Endothelial cell of umbilical vein (primary cell): ENCODE measurements at regions of chr5 and their contacts with region 1.

Region 1: DNA sequence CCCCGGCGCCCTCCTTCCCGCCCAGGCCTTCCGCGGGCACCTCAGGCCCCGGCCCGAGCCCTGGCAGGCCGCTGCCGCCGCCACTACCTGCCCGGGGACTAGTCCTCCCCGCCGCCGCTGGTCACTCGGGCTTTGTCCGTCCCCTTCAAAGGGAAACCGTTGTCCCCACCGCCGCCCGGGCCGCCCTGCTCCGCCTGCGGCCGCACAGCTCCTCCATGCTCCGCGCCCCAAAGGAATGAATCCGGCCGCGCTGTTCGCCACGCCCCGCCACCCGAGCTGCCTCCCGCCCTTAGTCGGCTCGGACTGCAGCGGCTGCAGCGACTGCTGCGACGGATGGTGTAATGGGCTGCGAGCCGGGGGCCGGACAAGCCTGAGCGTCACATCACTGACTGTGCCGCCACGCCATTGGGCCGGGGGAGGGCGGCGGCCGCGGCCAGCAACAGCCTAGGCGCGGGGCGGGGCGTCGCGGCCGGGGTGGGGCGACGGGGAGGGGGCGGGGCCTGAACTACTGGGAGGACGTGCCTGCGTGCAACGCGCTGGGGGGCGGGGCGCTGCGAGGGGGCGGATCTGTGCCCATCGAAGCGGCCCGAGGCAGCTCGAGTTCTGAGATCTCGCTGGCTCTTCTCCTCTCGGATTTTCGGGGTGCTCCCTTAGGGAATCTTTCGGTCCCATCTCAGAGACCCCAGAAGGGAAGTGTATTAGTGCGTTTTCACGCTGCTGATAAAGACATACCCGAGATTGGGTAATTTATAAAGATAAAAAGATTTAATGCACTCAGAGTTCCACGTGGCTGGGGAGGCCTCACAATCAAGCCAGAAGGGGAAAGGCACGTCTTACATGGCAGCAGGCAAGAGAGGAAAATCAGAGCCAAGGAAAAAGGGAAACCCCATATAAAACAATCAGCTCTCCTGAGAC is at the start of gene FEM1C:
- DNase-seq: peak; percentile 98
- H3K4me3 ChIP-seq: peak within 1 kb of the TSS; percentile 90 to 99 (median 97)
- H3K27ac ChIP-seq: peak within 1 kb of the TSS; percentile 89
- H3K4me1 ChIP-seq: peaks cover 25% of the 10 kb centered on the region
- H3K27me3 ChIP-seq: no peaks in the 10 kb centered on the region
- CTCF ChIP-seq: no peak
- POLR2A ChIP-seq: peak; percentile 92
- total RNA-seq, gene FEM1C: 16.0 and 16.7 TPM in 2 replicates

Region 2: GRCh38 chr5:115330830-115331229 is 213.9 kb before region 1 on chr5:
- CTCF ChIA-PET with region 1: no interaction called
- POLR2A ChIA-PET with region 1: no interaction called
- dilution Hi-C with region 1: no loop called
- intact Hi-C with region 1: no loop called
- DNase-seq: no peak
- H3K4me3 ChIP-seq: no peak overlapping the region
- H3K27ac ChIP-seq: no peak overlapping the region
- H3K4me1 ChIP-seq: no peaks in the 10 kb centered on the region
- H3K27me3 ChIP-seq: no peaks in the 10 kb centered on the region
- CTCF ChIP-seq: no peak
- POLR2A ChIP-seq: no peak

Region 3: DNA sequence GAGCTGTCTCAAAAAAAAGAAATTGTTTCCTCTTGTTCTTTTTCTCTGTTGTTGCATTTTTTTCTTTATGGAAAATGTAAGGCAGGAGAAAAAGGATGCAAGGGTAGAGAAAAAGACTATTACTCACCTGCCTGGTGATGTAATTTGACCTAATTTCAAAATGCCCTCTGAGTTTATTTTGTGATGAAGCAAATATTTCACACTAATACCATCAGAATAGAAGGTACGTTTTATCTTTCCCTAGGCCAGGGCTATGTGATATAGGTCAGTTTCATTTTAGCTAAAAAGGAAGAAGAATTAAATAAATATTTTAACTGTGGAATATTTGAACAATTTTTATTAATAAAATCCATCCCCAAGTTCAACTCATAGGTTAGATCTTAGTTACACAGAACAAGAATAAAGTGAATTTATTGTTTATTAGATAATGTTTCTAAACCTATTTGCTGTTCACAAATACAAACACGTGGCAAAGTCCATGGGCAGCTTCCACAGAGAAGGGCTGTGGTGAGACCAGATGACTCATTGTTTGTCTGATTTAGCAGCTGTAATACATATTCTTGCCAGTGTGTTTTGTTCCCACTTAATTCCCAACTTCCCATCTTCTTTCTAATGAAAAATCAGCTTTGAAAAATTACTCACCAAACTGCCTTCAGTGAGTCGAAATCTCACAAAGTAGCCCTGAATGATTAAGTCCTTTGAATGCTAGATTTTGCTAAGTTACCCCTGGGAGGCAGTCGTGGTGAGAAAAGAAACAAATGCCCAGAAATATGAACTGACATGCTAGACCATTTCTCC is 195.5 kb before region 1 on chr5:
- CTCF ChIA-PET with region 1: interaction called, 4 read pairs
- POLR2A ChIA-PET with region 1: no interaction called
- dilution Hi-C with region 1: no loop called
- intact Hi-C with region 1: loop called (anchors 1 kb)
- DNase-seq: peak; percentile 86
- H3K4me3 ChIP-seq: peak overlapping the region in 1 of 3 experiments; percentile 20
- H3K27ac ChIP-seq: peak overlapping the region; percentile 76
- H3K4me1 ChIP-seq: peaks cover 18% of the 10 kb centered on the region
- H3K27me3 ChIP-seq: no peaks in the 10 kb centered on the region
- CTCF ChIP-seq: no peak
- POLR2A ChIP-seq: no peak

Region 4: GRCh38 chr5:115415143-115415491 is 129.6 kb before region 1 on chr5:
- CTCF ChIA-PET with region 1: interaction called, 3 read pairs
- POLR2A ChIA-PET with region 1: no interaction called
- dilution Hi-C with region 1: no loop called
- intact Hi-C with region 1: loop called (anchors 5 kb)
- DNase-seq: peak; percentile 57
- H3K4me3 ChIP-seq: no peak overlapping the region
- H3K27ac ChIP-seq: no peak overlapping the region
- H3K4me1 ChIP-seq: peaks cover 17% of the 10 kb centered on the region
- H3K27me3 ChIP-seq: no peaks in the 10 kb centered on the region
- CTCF ChIP-seq: no peak
- POLR2A ChIP-seq: no peak

Region 5: DNA sequence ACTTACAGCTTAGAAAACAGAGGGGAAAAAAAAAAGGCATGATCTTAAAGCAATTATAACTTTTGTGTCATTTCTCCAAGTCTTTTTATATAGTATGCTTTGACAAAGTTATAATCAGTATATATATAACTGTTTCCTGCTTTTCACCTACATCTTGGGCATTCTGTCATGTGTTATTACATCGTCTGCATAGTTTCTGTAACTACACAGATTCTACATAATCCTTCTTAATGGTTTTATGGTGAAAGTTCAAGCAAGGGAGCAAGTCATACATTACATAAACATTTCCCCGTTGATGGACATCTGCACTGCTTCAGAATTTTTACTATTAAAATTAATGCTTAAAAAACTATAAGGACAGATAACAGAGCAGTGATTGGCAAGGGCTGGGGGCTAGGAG is 12.2 kb before region 1 on chr5:
- CTCF ChIA-PET with region 1: interaction called, 9 read pairs
- POLR2A ChIA-PET with region 1: interaction called, 3 read pairs
- dilution Hi-C with region 1: no loop called
- intact Hi-C with region 1: loop called (anchors 1 kb)
- DNase-seq: peak; percentile 42
- H3K4me3 ChIP-seq: no peak overlapping the region
- H3K27ac ChIP-seq: no peak overlapping the region
- H3K4me1 ChIP-seq: peaks cover 18% of the 10 kb centered on the region
- H3K27me3 ChIP-seq: no peaks in the 10 kb centered on the region
- CTCF ChIP-seq: no peak
- POLR2A ChIP-seq: no peak

Region 6: GRCh38 chr5:115579747-115580173 is 35.1 kb after region 1 on chr5:
- CTCF ChIA-PET with region 1: interaction called, 45 read pairs
- POLR2A ChIA-PET with region 1: interaction called, 10 read pairs
- dilution Hi-C with region 1: no loop called
- intact Hi-C with region 1: loop called (anchors 1 kb)
- DNase-seq: no peak
- H3K4me3 ChIP-seq: no peak overlapping the region
- H3K27ac ChIP-seq: no peak overlapping the region
- H3K4me1 ChIP-seq: peaks cover 21% of the 10 kb centered on the region
- H3K27me3 ChIP-seq: no peaks in the 10 kb centered on the region
- CTCF ChIP-seq: no peak
- POLR2A ChIP-seq: no peak

Region 7: GRCh38 chr5:115625579-115626444 is 81.1 kb after region 1 on chr5 and contains the start of gene TMED7:
- CTCF ChIA-PET with region 1: no interaction called
- POLR2A ChIA-PET with region 1: no interaction called
- dilution Hi-C with region 1: no loop called
- intact Hi-C with region 1: loop called (anchors 1 kb)
- DNase-seq: peak; percentile 99
- H3K4me3 ChIP-seq: peak within 1 kb of the TSS; percentile 86 to 98 (median 90)
- H3K27ac ChIP-seq: peak within 1 kb of the TSS; percentile 83
- H3K4me1 ChIP-seq: peaks cover 30% of the 10 kb centered on the region
- H3K27me3 ChIP-seq: no peaks in the 10 kb centered on the region
- CTCF ChIP-seq: no peak
- POLR2A ChIP-seq: peak; percentile 96
- total RNA-seq, gene TMED7: 101 TPM in 2 replicates